ENCODE measurements at regions of chr3 and their contacts with region 1.

Region 1: GRCh38 chr3:194404365-194405140 is 5.5 kb upstream of the GP5 start:
- DNase-seq: peak; percentile 75
- ATAC-seq: no peak
- H3K4me3 ChIP-seq: no peak overlapping the region
- H3K27ac ChIP-seq: no peak overlapping the region
- H3K4me1 ChIP-seq: peaks cover 8% of the 10 kb centered on the region; the same call in 1 of the 2 replicates
- H3K27me3 ChIP-seq: no peaks in the 10 kb centered on the region
- CTCF ChIP-seq: peak; percentile 86

Region 2: DNA sequence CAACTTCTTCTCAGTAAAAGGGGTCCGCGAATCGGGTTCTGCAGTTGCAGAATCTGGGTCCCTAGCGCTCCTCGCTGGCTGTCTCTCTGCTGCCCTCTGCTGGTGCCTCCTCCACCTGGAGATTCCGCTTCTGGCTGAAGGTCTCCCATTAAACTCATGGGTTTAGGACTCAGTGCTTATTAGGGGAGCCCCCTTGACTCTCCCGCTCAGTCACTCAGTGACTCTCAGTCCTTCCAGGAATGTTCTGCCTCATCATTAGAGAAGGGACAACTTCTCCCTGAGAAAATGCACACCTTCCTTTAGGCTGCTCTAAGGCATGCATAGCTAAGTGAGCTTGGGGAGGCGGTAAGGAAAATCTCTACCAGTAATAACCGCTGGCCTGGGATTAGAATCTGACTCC is 60.5 kb before region 1 on chr3:
- CTCF ChIA-PET with region 1: interaction called, 4 read pairs
- POLR2A ChIA-PET with region 1: no interaction called
- intact Hi-C with region 1: loop called (anchors 2 kb)
- DNase-seq: peak; percentile 82
- ATAC-seq: peak; percentile 91
- H3K4me3 ChIP-seq: no peak overlapping the region
- H3K27ac ChIP-seq: no peak overlapping the region
- H3K4me1 ChIP-seq: no peaks in the 10 kb centered on the region; the same call in 1 of the 2 replicates
- H3K27me3 ChIP-seq: no peaks in the 10 kb centered on the region
- CTCF ChIP-seq: peak; percentile 98

Region 3: GRCh38 chr3:194439881-194440550 is 35.5 kb after region 1 on chr3:
- CTCF ChIA-PET with region 1: no interaction called
- POLR2A ChIA-PET with region 1: no interaction called
- intact Hi-C with region 1: no loop called
- DNase-seq: no peak
- ATAC-seq: no peak
- H3K4me3 ChIP-seq: no peak overlapping the region
- H3K27ac ChIP-seq: no peak overlapping the region
- H3K4me1 ChIP-seq: no peaks in the 10 kb centered on the region
- H3K27me3 ChIP-seq: no peaks in the 10 kb centered on the region
- CTCF ChIP-seq: no peak

Measured in PC-3 (cell line).